Aorta (tissue), 5 donors: ENCODE measurements at regions of chr4 and their contacts with region 1.

Region 1: DNA sequence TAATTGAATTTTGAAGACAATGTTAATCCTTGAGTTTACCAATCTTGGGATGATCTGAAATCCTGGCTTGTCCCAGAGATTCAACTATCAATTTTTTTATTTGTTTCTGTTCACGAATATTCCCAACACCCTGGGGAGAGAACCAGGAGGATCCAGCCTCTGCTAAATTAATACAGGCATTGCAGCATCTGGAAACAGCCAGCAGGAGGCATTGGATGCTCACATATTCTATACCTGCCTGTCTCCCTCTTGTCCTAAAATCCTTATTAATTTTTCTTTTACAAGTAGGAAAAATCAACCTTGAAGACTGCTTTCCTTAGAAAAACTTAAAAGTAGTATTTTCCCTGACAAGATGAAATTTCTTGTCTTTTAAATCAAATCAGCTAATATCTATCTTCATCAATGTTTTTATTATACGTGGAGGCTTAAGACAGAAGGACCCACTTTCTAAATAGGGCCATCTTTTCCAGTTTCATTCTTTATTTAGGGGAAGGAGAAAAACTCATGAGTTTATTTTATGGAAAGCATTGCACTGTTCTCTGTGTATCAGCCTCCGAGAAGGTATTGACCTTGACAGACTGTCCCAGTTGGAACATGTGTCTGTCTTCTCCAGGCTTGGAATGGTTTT is 102.4 kb downstream of the CLNK start:
- DNase-seq: peak in 1 of 2 donors; percentile 53
- ATAC-seq: no peak
- H3K4me3 ChIP-seq: no peak overlapping the region
- H3K27ac ChIP-seq: no peak overlapping the region
- H3K4me1 ChIP-seq: no peaks in the 10 kb centered on the region
- H3K27me3 ChIP-seq: no peaks in the 10 kb centered on the region

Region 2: DNA sequence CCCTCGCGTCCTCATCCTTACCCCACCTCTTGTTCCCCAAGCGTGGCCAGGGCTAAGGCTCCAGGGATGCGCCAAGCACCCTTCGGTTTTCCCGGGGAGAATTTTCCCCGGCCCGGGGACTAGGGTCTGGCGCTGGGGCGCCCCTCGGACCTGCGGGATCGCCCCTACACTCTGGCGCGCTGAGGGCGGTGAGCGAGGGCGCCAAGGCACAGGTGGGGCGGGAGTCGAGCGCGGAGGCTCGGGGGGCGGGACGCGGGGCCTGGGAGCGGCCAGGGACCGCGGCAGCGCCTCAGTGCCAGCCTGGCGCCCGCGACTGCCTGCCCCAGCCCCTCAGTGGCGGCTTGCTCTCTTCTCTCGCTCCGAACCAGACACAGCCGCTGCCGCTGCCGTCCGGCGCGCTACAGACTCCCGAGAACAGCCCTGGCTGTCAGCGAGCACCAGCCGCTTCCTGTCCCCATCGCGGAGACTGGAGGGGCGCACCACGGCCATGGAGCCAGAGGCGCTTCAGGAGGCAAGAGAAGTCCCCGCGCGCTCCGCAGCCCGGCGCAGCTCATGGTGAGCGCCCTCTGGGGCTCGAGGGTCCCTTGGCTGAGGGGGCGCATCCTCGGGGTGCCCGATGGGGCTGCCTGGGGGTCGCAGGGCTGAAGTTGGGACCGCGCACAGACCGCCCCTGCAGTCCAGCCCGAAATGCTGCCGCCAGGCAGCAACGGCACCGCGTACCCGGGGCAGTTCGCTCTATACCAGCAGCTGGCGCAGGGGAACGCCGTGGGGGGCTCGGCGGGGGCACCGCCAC is 800.6 kb before region 1 on chr4 and contains the start of gene DRD5:
- intact Hi-C with region 1: no loop called
- DNase-seq: no peak
- ATAC-seq: no peak
- H3K4me3 ChIP-seq: no peak within 1 kb of the TSS
- H3K27ac ChIP-seq: no peak within 1 kb of the TSS
- H3K4me1 ChIP-seq: no peaks in the 10 kb centered on the region
- H3K27me3 ChIP-seq: no peaks in the 10 kb centered on the region
- total RNA-seq, gene DRD5: not detected

Region 3: GRCh38 chr4:11355224-11355623 is 773.1 kb after region 1 on chr4:
- intact Hi-C with region 1: no loop called
- DNase-seq: no peak
- ATAC-seq: no peak
- H3K4me3 ChIP-seq: no peak overlapping the region
- H3K27ac ChIP-seq: no peak overlapping the region
- H3K4me1 ChIP-seq: no peaks in the 10 kb centered on the region
- H3K27me3 ChIP-seq: no peaks in the 10 kb centered on the region

Region 4: DNA sequence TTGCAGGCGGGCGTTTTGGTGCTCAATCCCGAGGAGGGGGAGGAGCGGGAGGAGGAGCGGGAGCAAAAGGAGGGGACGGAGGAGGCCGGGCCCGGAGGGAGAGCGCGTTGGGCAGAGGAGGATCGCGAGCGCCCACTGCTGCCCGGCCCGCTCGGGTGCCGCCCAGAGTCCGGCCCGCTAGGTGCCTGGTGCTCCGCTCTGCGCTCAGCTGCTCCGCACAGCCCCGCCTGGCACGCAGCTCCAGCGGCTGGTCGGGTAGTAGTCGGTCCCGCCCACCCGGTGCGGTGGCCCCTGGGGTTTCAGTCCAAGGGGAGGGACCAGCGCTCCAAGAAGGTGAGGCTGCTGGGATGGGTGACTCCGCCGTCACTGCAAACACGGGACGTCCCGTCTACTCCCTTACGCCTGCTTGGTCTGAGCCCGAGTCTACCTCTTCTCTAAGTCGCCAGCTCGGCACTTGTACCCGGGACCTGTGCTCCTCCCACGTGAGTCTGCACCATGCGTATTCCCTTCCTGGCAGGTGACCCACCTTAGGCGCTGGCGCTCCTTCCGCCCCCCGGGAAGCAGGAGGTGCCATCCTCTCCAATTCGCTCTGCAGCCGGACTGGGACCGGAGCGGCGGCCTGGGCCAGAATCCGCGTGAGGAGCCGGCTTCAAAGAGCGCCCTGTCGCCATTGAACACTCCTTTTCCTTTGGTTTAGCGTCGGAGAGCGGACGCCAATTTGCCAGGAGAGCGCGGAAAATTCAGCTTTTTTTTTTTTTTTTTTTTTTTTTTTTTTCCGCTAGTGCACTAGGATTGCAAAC is 846.9 kb after region 1 on chr4:
- intact Hi-C with region 1: loop called (anchors 5 to 10 kb)
- DNase-seq: peak; percentile 92 to 93
- ATAC-seq: peak; percentile 95
- H3K4me3 ChIP-seq: peak overlapping the region in 1 of 2 donors; percentile 40
- H3K27ac ChIP-seq: no peak overlapping the region
- H3K4me1 ChIP-seq: no peaks in the 10 kb centered on the region
- H3K27me3 ChIP-seq: no peaks in the 10 kb centered on the region

Region 5: DNA sequence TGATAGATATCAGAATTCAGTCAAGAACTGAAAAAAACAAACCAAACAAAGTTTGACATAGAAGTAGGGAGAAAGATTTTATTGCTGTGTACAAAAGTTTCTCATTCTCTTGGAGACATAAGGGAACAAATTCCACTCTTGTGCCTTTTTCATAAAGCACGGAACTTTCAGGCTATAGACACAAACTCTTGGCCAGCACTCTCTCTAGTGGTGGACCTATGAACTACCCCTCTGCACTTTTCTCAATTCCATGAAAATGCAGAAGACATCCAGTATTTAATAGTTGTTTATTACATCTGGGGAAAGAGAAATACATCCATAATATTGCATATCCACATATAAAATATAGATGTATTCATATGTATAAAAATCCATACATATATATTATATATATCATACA is 1138.1 kb after region 1 on chr4:
- intact Hi-C with region 1: loop called in 1 of 2 experiments (anchors 10 kb)
- DNase-seq: no peak
- ATAC-seq: no peak
- H3K4me3 ChIP-seq: no peak overlapping the region
- H3K27ac ChIP-seq: no peak overlapping the region
- H3K4me1 ChIP-seq: no peaks in the 10 kb centered on the region
- H3K27me3 ChIP-seq: no peaks in the 10 kb centered on the region